PC-3 (cell line): ENCODE measurements at regions of chr12 and their contacts with region 1.

Region 1: GRCh38 chr12:128069359-128069997 is 197.5 kb upstream of the TMEM132C start:
- DNase-seq: peak; percentile 92
- ATAC-seq: peak; percentile 75
- H3K4me3 ChIP-seq: no peak overlapping the region
- H3K27ac ChIP-seq: no peak overlapping the region
- H3K4me1 ChIP-seq: no peaks in the 10 kb centered on the region
- H3K27me3 ChIP-seq: peaks cover 57% of the 10 kb centered on the region
- CTCF ChIP-seq: peak; percentile 95

Region 2: GRCh38 chr12:127025545-127025944 is 1043.9 kb before region 1 on chr12:
- CTCF ChIA-PET with region 1: no interaction called
- POLR2A ChIA-PET with region 1: no interaction called
- intact Hi-C with region 1: loop called (anchors 10 kb)
- DNase-seq: peak; percentile 60
- ATAC-seq: peak; percentile 83
- H3K4me3 ChIP-seq: no peak overlapping the region
- H3K27ac ChIP-seq: no peak overlapping the region
- H3K4me1 ChIP-seq: no peaks in the 10 kb centered on the region
- H3K27me3 ChIP-seq: no peaks in the 10 kb centered on the region
- CTCF ChIP-seq: peak; percentile 72

Region 3: GRCh38 chr12:127677537-127678131 is 391.8 kb before region 1 on chr12:
- CTCF ChIA-PET with region 1: no interaction called
- POLR2A ChIA-PET with region 1: no interaction called
- intact Hi-C with region 1: loop called (anchors 5 kb)
- DNase-seq: peak; percentile 97
- ATAC-seq: peak; percentile 93
- H3K4me3 ChIP-seq: no peak overlapping the region
- H3K27ac ChIP-seq: no peak overlapping the region
- H3K4me1 ChIP-seq: peaks cover 6% of the 10 kb centered on the region; the same call in 1 of the 2 replicates
- H3K27me3 ChIP-seq: no peaks in the 10 kb centered on the region
- CTCF ChIP-seq: peak; percentile 96

Region 4: DNA sequence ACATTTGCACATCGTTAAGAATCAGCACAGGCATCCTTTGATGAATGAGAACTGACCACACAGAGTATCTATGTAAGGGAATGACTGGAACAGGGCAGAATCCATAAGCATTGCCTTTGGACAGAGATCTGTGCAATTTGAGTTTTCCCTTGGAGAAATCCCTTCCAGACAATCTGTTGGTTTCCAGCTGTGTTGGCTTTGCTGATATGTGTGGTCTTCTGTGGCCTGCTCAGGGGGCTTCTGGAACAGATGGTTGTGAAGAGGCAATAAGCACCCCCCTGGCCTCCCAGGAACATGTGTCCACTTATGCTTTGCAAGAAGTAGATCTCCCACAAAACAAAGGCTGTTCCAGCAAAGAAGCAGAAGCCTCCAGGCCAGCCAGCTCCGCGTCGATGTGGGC is 86.1 kb after region 1 on chr12:
- CTCF ChIA-PET with region 1: no interaction called
- POLR2A ChIA-PET with region 1: no interaction called
- intact Hi-C with region 1: no loop called
- DNase-seq: no peak
- ATAC-seq: no peak
- H3K4me3 ChIP-seq: no peak overlapping the region
- H3K27ac ChIP-seq: no peak overlapping the region
- H3K4me1 ChIP-seq: no peaks in the 10 kb centered on the region
- H3K27me3 ChIP-seq: peaks cover 56% of the 10 kb centered on the region
- CTCF ChIP-seq: no peak